ENCODE measurements at regions of chr14 and their contacts with region 1.

Region 1: GRCh38 chr14:104677512-104678332 is 11.7 kb upstream of the INF2 start:
- DNase-seq: no peak
- ATAC-seq: peak; percentile 59
- H3K4me3 ChIP-seq: peak overlapping the region; percentile 52 to 62
- H3K27ac ChIP-seq: peak overlapping the region; percentile 98
- H3K4me1 ChIP-seq: peaks cover 53 to 69% of the 10 kb centered on the region in 2 experiments
- H3K27me3 ChIP-seq: no peaks in the 10 kb centered on the region
- CTCF ChIP-seq: no peak
- POLR2A ChIP-seq: peak; percentile 90
- RAD21 ChIP-seq: no peak

Region 2: DNA sequence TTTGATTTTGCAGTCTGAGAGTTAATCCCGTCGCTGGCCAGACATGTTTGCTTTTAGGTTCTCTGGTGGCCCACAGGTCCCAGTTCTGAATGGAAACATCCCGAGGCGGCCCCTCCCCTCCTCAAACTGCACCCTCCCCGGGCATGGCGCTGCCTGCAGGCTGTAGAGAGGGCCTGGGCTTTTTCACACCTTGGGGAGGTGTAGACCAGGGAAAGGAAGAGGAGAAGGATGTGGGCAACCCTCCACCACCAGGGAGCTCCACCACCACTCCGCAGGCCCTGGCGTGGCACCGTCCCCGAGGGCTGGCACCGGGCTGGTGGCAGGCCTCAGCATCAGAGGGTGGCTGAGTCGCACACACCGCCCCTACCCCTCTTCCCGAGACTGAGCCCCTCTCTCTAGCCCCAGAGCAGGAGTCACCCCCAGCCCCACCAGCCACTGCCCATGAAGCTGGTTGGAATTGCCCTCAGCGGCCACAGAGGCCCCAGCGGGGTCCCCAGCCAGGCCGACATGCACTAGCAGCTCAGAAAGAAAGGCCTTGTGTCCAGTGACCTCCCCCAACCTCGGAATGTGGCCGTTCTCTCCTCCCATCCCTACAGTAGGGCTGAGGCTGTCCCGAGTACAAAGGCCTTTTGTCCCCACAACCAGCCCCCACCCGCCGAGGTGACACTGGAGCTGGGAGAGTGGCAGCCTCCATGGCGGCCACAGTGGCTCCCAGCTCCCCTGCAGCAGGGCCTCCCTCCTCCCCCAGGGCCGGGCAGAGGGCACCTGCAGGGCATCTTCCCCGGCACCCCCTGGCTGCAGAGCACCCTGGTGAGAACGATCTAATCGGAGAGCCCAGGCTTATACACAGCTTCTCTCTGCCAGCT is 11.8 kb before region 1 on chr14:
- CTCF ChIA-PET with region 1: interaction called, 20 read pairs
- POLR2A ChIA-PET with region 1: interaction called, 21 read pairs
- RAD21 ChIA-PET with region 1: interaction called, 5 to 6 read pairs
- intact Hi-C with region 1: no loop called
- DNase-seq: peak; percentile 91
- ATAC-seq: peak; percentile 84
- H3K4me3 ChIP-seq: peak overlapping the region; percentile 22 to 29
- H3K27ac ChIP-seq: peak overlapping the region; percentile 73
- H3K4me1 ChIP-seq: peaks cover 37 to 43% of the 10 kb centered on the region in 2 experiments
- H3K27me3 ChIP-seq: no peaks in the 10 kb centered on the region
- CTCF ChIP-seq: peak; percentile 58 to 76 (median 71); a peak in 5 of 6 replicates
- POLR2A ChIP-seq: no peak
- RAD21 ChIP-seq: peak; percentile 78

Region 3: DNA sequence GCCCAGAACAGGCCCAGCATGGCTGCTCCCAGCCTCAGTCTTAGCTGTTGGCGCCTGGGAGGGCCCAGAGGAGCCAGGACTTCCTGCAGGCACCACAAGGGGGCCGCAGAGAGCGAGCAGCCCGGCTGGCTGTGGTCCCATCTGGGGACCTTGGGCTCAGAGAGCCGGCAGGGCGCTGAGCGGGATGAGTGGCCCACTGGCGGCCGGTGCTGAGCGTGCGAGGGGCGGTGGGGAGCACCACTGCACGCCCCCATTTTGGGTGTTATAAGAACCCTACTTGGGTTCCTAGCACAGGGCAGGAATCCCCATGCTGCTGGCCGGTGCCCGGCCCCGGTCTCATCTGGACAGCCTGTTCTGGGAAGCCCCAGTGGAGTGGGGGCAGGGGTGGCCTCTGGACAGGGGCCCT is 771.0 kb after region 1 on chr14:
- CTCF ChIA-PET with region 1: no interaction called
- POLR2A ChIA-PET with region 1: no interaction called
- RAD21 ChIA-PET with region 1: no interaction called
- intact Hi-C with region 1: no loop called
- DNase-seq: no peak
- ATAC-seq: peak; percentile 88
- H3K4me3 ChIP-seq: no peak overlapping the region
- H3K27ac ChIP-seq: no peak overlapping the region
- H3K4me1 ChIP-seq: no peaks in the 10 kb centered on the region
- H3K27me3 ChIP-seq: no peaks in the 10 kb centered on the region
- CTCF ChIP-seq: peak; percentile 58 to 85 (median 72); a peak in 5 of 6 replicates
- POLR2A ChIP-seq: no peak
- RAD21 ChIP-seq: peak; percentile 61